H1 (cell line): ENCODE measurements at regions of chr20 and their contacts with region 1.

Region 1: DNA sequence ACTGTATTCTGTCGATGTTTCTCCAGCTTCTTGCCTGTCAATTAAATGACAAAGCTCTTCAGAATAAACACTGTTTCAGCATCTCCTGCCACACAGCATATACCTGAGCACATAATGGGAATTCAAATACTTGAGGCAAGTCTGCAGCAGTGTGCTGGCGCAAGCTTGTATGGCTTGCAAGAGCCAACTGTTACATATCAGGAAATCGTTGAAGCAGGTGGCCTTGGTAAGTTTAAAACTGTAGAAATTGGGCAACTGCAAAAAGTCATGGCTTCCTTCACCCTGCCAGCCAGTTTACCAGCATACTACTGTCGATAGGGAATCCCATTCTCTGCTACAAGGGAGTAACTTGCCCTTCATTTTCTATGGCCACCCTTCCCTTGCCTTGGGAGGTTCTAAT is 23.0 kb downstream of the CPNE1 start:
- DNase-seq: no peak
- H3K4me3 ChIP-seq: no peak overlapping the region
- H3K27ac ChIP-seq: no peak overlapping the region
- H3K4me1 ChIP-seq: peaks cover 0 to 9% (median 2%) of the 10 kb centered on the region in 4 experiments; a peak in 4 of 7 replicates
- H3K27me3 ChIP-seq: no peaks in the 10 kb centered on the region
- CTCF ChIP-seq: no peak
- EP300 ChIP-seq: no peak
- POLR2A ChIP-seq: no peak
- RAD21 ChIP-seq: no peak

Region 2: DNA sequence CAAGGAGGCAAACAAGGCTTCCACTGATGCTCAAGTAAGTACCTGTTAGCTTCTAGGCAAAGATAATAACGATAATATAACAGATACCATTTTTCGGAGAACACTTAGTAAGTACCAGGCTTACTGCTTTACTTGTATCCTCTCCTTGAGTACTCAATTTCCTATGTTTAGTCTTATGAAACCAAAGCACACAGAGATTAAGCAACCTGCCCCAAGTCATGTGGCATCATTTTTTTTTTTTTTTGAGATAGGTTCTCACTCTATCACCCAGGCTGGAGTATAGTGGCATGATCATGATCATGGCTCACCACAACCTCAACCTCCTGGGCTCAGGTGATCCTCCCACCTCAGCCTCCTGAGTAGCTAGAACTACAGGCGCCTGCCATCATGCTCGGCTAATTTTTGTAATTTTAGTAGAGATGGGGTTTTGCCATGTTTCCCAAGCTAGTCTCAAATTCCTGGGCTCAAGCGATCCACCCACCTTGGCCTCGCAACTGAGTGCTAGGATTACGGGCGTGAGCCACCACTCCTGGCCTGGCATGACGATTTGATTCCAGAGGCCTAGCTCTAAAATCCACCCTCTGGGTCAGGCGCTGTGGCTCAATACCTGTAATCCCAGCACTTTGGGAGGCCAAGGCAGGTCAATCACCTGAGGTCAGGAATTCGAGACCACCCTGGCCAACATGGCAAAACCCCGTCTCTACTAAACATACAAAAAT is 12.2 kb before region 1 on chr20:
- CTCF ChIA-PET with region 1: interaction called, 7 read pairs
- POLR2A ChIA-PET with region 1: interaction called, 22 read pairs
- DNase-seq: no peak
- H3K4me3 ChIP-seq: no peak overlapping the region
- H3K27ac ChIP-seq: no peak overlapping the region
- H3K4me1 ChIP-seq: no peaks in the 10 kb centered on the region
- H3K27me3 ChIP-seq: no peaks in the 10 kb centered on the region
- CTCF ChIP-seq: no peak
- EP300 ChIP-seq: no peak
- POLR2A ChIP-seq: no peak
- RAD21 ChIP-seq: no peak

Region 3: GRCh38 chr20:35657271-35657670 is 15.5 kb after region 1 on chr20:
- CTCF ChIA-PET with region 1: interaction called, 3 read pairs
- POLR2A ChIA-PET with region 1: interaction called, 28 read pairs
- DNase-seq: no peak
- H3K4me3 ChIP-seq: no peak overlapping the region
- H3K27ac ChIP-seq: no peak overlapping the region
- H3K4me1 ChIP-seq: peaks cover 0 to 4% (median 1%) of the 10 kb centered on the region in 4 experiments; a peak in 4 of 7 replicates
- H3K27me3 ChIP-seq: no peaks in the 10 kb centered on the region
- CTCF ChIP-seq: no peak
- EP300 ChIP-seq: no peak
- POLR2A ChIP-seq: no peak
- RAD21 ChIP-seq: no peak

Region 4: GRCh38 chr20:35699127-35699975 is 57.6 kb after region 1 on chr20 and contains the starts of genes NFS1 and ROMO1:
- CTCF ChIA-PET with region 1: no interaction called
- POLR2A ChIA-PET with region 1: no interaction called
- DNase-seq: peak; percentile 65 to 90
- H3K4me3 ChIP-seq: peak within 1 kb of the TSS; percentile 66 to 99 (median 88)
- H3K27ac ChIP-seq: peak within 1 kb of the TSS; percentile 78
- H3K4me1 ChIP-seq: peaks cover 0 to 2% (median under 1%) of the 10 kb centered on the region in 4 experiments; a peak in 3 of 7 replicates
- H3K27me3 ChIP-seq: no peaks in the 10 kb centered on the region
- CTCF ChIP-seq: peak in 2 of 3 experiments; percentile 32 to 39; a peak in 2 of 4 replicates
- EP300 ChIP-seq: peak in 1 of 2 experiments; percentile 16; a peak in 1 of 3 replicates
- POLR2A ChIP-seq: peak; percentile 83 to 93
- RAD21 ChIP-seq: peak; percentile 7 to 31; a peak in 1 of 4 replicates
- total RNA-seq, gene NFS1: 25.1 and 26.1 TPM in 2 replicates
- total RNA-seq, gene ROMO1: 164 and 173 TPM in 2 replicates

Region 5: DNA sequence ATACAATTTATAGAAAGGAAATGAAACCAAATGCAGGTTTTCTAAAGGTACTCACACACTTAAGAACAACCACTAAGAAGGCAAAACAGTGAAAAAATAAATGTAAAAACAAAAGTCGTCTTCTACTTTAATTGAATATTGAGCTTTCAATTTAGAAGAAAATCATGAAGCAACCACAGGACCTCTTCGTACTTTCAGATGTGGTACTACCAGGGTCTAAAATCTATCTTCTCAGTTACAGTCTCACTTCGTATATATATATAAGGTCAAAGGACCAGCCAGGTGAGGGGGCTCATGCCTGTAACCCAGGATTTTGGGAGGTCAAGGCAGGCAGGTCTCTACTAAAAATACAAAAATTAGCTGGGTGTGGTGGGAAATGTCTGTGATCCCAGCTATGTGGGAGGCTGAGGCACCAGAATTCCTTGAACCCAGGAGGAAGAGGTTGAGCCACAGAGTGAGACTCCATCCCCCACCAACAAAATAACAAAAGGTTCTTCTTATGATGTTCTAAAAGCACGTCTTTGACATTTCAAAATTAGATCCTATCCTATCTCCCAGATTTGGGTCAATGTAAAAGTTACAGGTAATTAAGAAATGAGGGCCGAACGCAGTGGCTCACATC is 70.0 kb after region 1 on chr20:
- CTCF ChIA-PET with region 1: no interaction called
- POLR2A ChIA-PET with region 1: no interaction called
- DNase-seq: peak in 1 of 2 experiments; percentile 33
- H3K4me3 ChIP-seq: no peak overlapping the region
- H3K27ac ChIP-seq: no peak overlapping the region
- H3K4me1 ChIP-seq: no peaks in the 10 kb centered on the region
- H3K27me3 ChIP-seq: no peaks in the 10 kb centered on the region
- CTCF ChIP-seq: no peak
- EP300 ChIP-seq: no peak
- POLR2A ChIP-seq: no peak
- RAD21 ChIP-seq: no peak